Activated naive CD4-positive, alpha-beta T cell treated with anti-CD3 and anti-CD28 coated beads, Interleukin-2, amount 10 ng/mL, durations not matched to agents 7 days and 5 days (primary cell): ENCODE measurements at regions of chr1 and their contacts with region 1.

Region 1: DNA sequence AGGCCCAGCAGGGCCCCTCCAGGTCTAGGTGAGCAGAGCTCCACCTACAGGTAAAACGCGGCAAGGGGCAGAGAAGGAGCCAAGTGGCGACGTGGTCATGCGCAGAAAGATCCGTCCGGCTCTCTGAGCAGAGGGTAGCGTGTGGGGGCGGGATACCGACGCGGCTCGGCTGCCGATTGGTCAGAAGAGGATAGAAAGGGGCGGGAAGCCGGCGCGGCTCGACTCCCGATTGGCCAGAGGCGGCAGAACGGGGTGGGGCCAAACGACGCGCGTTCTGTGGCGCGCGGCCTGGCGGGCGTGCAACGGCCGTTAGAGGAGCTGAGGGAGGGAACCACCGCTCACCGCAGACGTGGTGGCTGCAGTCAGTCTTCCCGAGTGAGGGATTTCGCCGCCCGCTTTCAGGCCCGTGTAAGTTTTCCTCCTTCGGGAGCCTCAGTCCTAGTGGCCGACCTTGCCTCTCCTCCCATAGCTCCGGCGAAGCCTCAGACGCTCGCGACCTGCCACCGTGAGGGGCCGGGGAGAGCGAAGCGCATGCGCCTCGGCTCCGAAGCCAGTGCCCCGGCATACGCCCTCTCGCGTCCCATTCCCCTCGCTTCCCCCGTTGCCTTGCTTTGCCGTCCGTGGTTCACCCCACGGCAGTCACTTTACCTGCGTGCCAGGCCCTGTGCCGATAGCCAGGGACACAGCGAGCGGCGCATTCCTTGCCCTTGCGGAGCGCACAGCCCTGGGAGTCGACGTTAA is at the start of gene CEP85:
- DNase-seq: peak; percentile 99
- H3K4me3 Mint-ChIP-seq: peak within 1 kb of the TSS; percentile 93
- H3K27ac Mint-ChIP-seq: peak within 1 kb of the TSS; percentile 92
- H3K4me1 Mint-ChIP-seq: peaks cover 39% of the 10 kb centered on the region
- H3K27me3 Mint-ChIP-seq: peaks cover 24% of the 10 kb centered on the region

Region 2: GRCh38 chr1:26169669-26170471 is 64.2 kb before region 1 on chr1 and contains the start of gene ZNF593:
- CTCF ChIA-PET with region 1: interaction called, 36 read pairs
- DNase-seq: peak; percentile 89
- H3K4me3 Mint-ChIP-seq: peak within 1 kb of the TSS; percentile 85
- H3K27ac Mint-ChIP-seq: peak within 1 kb of the TSS; percentile 84
- H3K4me1 Mint-ChIP-seq: peaks cover 39% of the 10 kb centered on the region
- H3K27me3 Mint-ChIP-seq: peaks cover 35% of the 10 kb centered on the region

Region 3: GRCh38 chr1:26279456-26280332 is 45.6 kb after region 1 on chr1 and contains the start of gene SH3BGRL3:
- CTCF ChIA-PET with region 1: interaction called, 20 read pairs
- DNase-seq: peak; percentile 91
- H3K4me3 Mint-ChIP-seq: peak within 1 kb of the TSS; percentile 91
- H3K27ac Mint-ChIP-seq: peak within 1 kb of the TSS; percentile 93
- H3K4me1 Mint-ChIP-seq: peaks cover 88% of the 10 kb centered on the region
- H3K27me3 Mint-ChIP-seq: no peaks in the 10 kb centered on the region